ENCODE measurements at regions of chr2 and their contacts with region 1.

Region 1: DNA sequence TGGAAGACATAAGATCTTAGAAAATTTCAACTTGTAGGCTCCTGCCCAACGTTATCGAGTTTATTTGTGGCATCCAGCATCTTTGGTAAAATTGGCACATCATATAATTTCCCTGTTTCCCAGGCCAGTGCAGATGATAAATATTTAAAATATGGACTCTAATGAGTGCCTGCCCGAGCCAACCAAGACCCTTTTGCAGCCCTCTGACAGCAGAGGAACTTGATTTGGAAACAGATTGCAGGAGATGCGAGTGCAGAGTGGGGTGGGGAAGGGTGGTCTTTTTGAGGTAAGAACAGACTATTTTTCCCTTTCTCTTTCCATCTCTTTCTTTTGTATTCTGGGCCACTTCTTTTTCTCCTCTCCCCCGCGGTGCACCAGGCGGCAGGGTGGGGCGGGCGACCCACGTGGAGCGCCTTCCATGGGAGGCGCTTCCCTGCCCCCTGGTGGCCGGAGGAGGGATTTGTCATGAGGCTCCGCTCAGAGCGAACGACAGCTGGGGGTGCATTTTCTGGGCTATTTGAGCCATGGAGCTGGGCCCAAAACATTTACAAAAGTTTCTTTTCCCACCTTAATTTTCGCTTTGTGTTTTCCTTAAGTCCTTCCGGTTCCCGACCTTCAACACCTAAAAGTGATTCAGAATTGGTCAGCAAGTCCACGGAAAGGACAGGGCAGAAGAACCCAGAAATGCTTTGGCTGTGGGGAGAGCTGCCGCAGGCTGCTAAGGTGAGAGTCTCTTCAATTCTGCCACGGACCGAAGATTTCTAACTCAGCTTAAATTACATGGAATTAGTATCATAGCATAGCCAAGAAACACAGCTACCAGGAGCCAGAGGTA is 32.7 kb downstream of the LPIN1 start:
- H3K4me3 ChIP-seq: no peak overlapping the region
- H3K27ac ChIP-seq: no peak overlapping the region
- H3K4me1 ChIP-seq: no peaks in the 10 kb centered on the region
- CTCF ChIP-seq: peak; percentile 86

Region 2: GRCh38 chr2:11688222-11689069 is 90.7 kb before region 1 on chr2:
- CTCF ChIA-PET with region 1: interaction called, 247 read pairs
- POLR2A ChIA-PET with region 1: no interaction called
- H3K4me3 ChIP-seq: no peak overlapping the region
- H3K27ac ChIP-seq: no peak overlapping the region
- H3K4me1 ChIP-seq: no peaks in the 10 kb centered on the region
- CTCF ChIP-seq: peak; percentile 70

Region 3: DNA sequence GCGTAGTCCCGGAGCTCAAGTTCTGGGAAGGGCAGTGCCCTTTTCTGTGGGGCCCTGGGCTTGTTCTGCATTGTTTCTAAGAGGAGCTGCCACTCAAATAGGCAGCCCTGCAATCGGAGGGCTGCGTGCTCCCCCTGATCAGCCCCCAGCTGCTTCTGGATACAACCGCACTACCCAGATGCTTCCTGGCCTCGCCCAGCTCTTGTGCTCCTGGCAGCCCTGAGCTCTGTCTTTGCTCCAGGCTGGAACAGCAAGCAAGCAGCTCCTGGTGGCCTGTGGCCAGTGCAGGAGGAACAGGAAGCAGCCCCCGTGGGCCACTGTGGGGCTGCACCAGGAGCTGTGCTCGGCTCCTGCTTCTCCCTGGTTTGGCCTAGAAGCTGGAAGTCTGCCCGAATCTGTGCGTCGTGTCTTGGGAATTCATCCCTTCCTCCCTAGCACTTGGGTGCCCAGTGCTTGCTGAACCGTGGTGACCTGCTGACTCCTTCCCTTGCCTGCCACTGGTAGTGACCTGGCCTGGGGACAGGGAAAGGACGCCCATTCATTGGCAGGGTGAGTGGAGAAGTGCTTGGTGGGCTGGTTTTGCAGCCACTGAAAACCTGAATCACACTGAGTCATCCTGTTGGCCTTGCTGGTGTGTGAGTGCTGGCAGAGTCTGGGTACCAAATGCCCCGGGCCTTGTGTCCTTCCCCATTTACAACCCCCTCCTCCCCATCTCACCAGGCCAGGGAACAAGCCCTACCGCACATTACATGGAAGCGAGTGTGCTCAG is 81.9 kb before region 1 on chr2:
- CTCF ChIA-PET with region 1: interaction called, 247 read pairs
- POLR2A ChIA-PET with region 1: no interaction called
- H3K4me3 ChIP-seq: no peak overlapping the region
- H3K27ac ChIP-seq: no peak overlapping the region
- H3K4me1 ChIP-seq: no peaks in the 10 kb centered on the region
- CTCF ChIP-seq: no peak

Region 4: GRCh38 chr2:11738589-11739436 is 40.3 kb before region 1 on chr2:
- CTCF ChIA-PET with region 1: interaction called, 44 read pairs
- POLR2A ChIA-PET with region 1: no interaction called
- H3K4me3 ChIP-seq: no peak overlapping the region
- H3K27ac ChIP-seq: no peak overlapping the region
- H3K4me1 ChIP-seq: no peaks in the 10 kb centered on the region
- CTCF ChIP-seq: peak; percentile 74

Region 5: DNA sequence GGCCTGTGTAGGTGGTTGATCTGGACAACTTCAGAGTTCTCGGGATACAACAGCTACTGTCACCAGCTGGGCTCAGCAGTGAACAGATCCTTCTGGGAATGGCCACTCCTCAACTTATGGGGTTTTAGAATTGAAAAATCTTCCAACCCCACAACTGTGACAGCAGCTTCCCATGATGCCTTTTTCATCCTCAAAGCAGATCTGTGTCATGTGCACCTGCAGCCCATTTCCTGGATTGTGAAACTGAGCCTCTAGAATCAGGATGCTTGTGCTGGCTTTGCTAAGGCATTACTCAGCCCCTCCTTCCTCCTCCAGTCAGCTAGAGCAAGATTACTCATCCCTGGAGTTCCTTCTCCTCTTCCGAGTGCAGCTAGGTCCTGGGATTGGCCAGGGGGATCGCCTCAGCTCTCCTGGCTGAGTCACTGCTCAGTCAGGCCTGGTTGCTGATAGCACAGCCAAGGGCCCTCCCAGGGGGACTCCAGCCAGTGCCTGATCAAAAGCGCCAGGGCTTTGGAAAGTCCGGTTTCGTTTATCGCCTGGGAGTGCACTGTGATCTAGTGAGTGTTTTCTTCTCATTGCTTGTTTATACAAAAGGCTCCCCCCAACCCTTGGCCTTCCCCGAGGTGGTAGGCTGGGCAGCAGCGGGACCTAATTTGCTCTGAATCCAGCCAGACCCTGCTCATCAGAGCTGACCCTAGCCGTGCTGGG is 35.1 kb before region 1 on chr2:
- CTCF ChIA-PET with region 1: interaction called, 44 read pairs
- POLR2A ChIA-PET with region 1: interaction called, 4 read pairs
- H3K4me3 ChIP-seq: no peak overlapping the region
- H3K27ac ChIP-seq: peak overlapping the region; percentile 7; the same call in 1 of the 2 replicates
- H3K4me1 ChIP-seq: 0 out of 2 replicates have a peak, but pooled peaks cover 5% of the 10 kb centered on the region
- CTCF ChIP-seq: no peak

Region 6: GRCh38 chr2:11753886-11754699 is 25.0 kb before region 1 on chr2:
- CTCF ChIA-PET with region 1: interaction called, 14 read pairs
- POLR2A ChIA-PET with region 1: interaction called, 4 read pairs
- H3K4me3 ChIP-seq: no peak overlapping the region
- H3K27ac ChIP-seq: peak overlapping the region; percentile 3; the same call in 1 of the 2 replicates
- H3K4me1 ChIP-seq: peaks cover 26% of the 10 kb centered on the region
- CTCF ChIP-seq: no peak